GM12878 (cell line): ENCODE measurements at regions of chr21 and their contacts with region 1.

Region 1: GRCh38 chr21:25501996-25502665 is 105.2 kb downstream of the MRPL39 start:
- DNase-seq: peak; percentile 87
- ATAC-seq: peak; percentile 78
- H3K4me3 ChIP-seq: no peak overlapping the region
- H3K27ac ChIP-seq: peak overlapping the region; percentile 83
- H3K4me1 ChIP-seq: peaks cover 31% of the 10 kb centered on the region
- H3K27me3 ChIP-seq: no peaks in the 10 kb centered on the region
- CTCF ChIP-seq: no peak
- EP300 ChIP-seq: peak; percentile 8 to 26; a peak in 2 of 4 replicates
- POLR2A ChIP-seq: no peak
- RAD21 ChIP-seq: peak; percentile 17; the same call in 1 of the 2 replicates

Region 2: GRCh38 chr21:25457411-25457810 is 44.7 kb before region 1 on chr21:
- CTCF ChIA-PET with region 1: interaction called, 5 read pairs
- POLR2A ChIA-PET with region 1: interaction called, 3 read pairs
- RAD21 ChIA-PET with region 1: interaction called, 4 read pairs
- SMC1A ChIA-PET with region 1: interaction called, 5 read pairs
- in situ Hi-C with region 1: no loop called
- intact Hi-C with region 1: loop called (anchors 1 kb)
- DNase-seq: peak; percentile 83
- ATAC-seq: peak; percentile 60
- H3K4me3 ChIP-seq: no peak overlapping the region
- H3K27ac ChIP-seq: peak overlapping the region; percentile 98
- H3K4me1 ChIP-seq: peaks cover 52% of the 10 kb centered on the region
- H3K27me3 ChIP-seq: no peaks in the 10 kb centered on the region
- CTCF ChIP-seq: no peak
- EP300 ChIP-seq: peak; percentile 100
- POLR2A ChIP-seq: no peak
- RAD21 ChIP-seq: peak; percentile 25; the same call in 1 of the 2 replicates

Region 3: GRCh38 chr21:25464275-25464674 is 37.9 kb before region 1 on chr21:
- CTCF ChIA-PET with region 1: interaction called, 5 read pairs
- POLR2A ChIA-PET with region 1: interaction called, 4 read pairs
- RAD21 ChIA-PET with region 1: interaction called, 4 read pairs
- SMC1A ChIA-PET with region 1: interaction called, 14 read pairs
- in situ Hi-C with region 1: no loop called
- intact Hi-C with region 1: loop called (anchors 2 kb)
- DNase-seq: no peak
- ATAC-seq: peak; percentile 76
- H3K4me3 ChIP-seq: peak overlapping the region; percentile 22; the same call in 1 of the 2 replicates
- H3K27ac ChIP-seq: peak overlapping the region; percentile 87
- H3K4me1 ChIP-seq: peaks cover 41% of the 10 kb centered on the region
- H3K27me3 ChIP-seq: no peaks in the 10 kb centered on the region
- CTCF ChIP-seq: no peak
- EP300 ChIP-seq: peak; percentile 69 to 94; a peak in 3 of 4 replicates
- POLR2A ChIP-seq: no peak
- RAD21 ChIP-seq: no peak

Region 4: GRCh38 chr21:25573409-25574206 is 71.5 kb after region 1 on chr21:
- CTCF ChIA-PET with region 1: no interaction called
- POLR2A ChIA-PET with region 1: interaction called, 3 read pairs
- RAD21 ChIA-PET with region 1: interaction called, 5 read pairs
- SMC1A ChIA-PET with region 1: interaction called, 13 read pairs
- in situ Hi-C with region 1: loop called (anchors 10 kb)
- intact Hi-C with region 1: loop called (anchors 1 kb)
- DNase-seq: peak; percentile 81
- ATAC-seq: peak; percentile 38
- H3K4me3 ChIP-seq: peak overlapping the region; percentile 14; the same call in 1 of the 2 replicates
- H3K27ac ChIP-seq: peak overlapping the region; percentile 92
- H3K4me1 ChIP-seq: peaks cover 38% of the 10 kb centered on the region
- H3K27me3 ChIP-seq: no peaks in the 10 kb centered on the region
- CTCF ChIP-seq: no peak
- EP300 ChIP-seq: no peak
- POLR2A ChIP-seq: peak; percentile 80
- RAD21 ChIP-seq: no peak

Region 5: GRCh38 chr21:25670726-25671125 is 168.6 kb after region 1 on chr21:
- CTCF ChIA-PET with region 1: no interaction called
- POLR2A ChIA-PET with region 1: no interaction called
- RAD21 ChIA-PET with region 1: no interaction called
- SMC1A ChIA-PET with region 1: no interaction called
- in situ Hi-C with region 1: no loop called
- intact Hi-C with region 1: no loop called
- DNase-seq: no peak
- ATAC-seq: no peak
- H3K4me3 ChIP-seq: no peak overlapping the region
- H3K27ac ChIP-seq: no peak overlapping the region
- H3K4me1 ChIP-seq: no peaks in the 10 kb centered on the region
- H3K27me3 ChIP-seq: no peaks in the 10 kb centered on the region
- CTCF ChIP-seq: no peak
- EP300 ChIP-seq: no peak
- POLR2A ChIP-seq: no peak
- RAD21 ChIP-seq: no peak